ENCODE measurements at regions of chr2 and their contacts with region 1.

Region 1: GRCh38 chr2:64750817-64751285 is 97.1 kb upstream of the SERTAD2 start:
- DNase-seq: peak; percentile 99
- ATAC-seq: peak; percentile 81
- H3K4me3 ChIP-seq: peak overlapping the region; percentile 75 to 99 (median 93)
- H3K4me3 Mint-ChIP-seq: peak overlapping the region; percentile 91
- H3K27ac ChIP-seq: peak overlapping the region; percentile 83 to 88
- H3K27ac Mint-ChIP-seq: peak overlapping the region; percentile 98
- H3K4me1 ChIP-seq: peaks cover 18 to 19% of the 10 kb centered on the region in 2 donors
- H3K4me1 Mint-ChIP-seq: peaks cover 28% of the 10 kb centered on the region
- H3K27me3 ChIP-seq: no peaks in the 10 kb centered on the region
- H3K27me3 Mint-ChIP-seq: no peaks in the 10 kb centered on the region
- CTCF ChIP-seq: no peak

Region 2: GRCh38 chr2:64179582-64180321 is 571.1 kb before region 1 on chr2:
- CTCF ChIA-PET with region 1: no interaction called
- POLR2A ChIA-PET with region 1: no interaction called
- intact Hi-C with region 1: no loop called
- DNase-seq: peak; percentile 42
- ATAC-seq: peak; percentile 56
- H3K4me3 ChIP-seq: no peak overlapping the region
- H3K4me3 Mint-ChIP-seq: no peak overlapping the region
- H3K27ac ChIP-seq: no peak overlapping the region
- H3K27ac Mint-ChIP-seq: no peak overlapping the region
- H3K4me1 ChIP-seq: peaks cover 0 to 4% of the 10 kb centered on the region in 2 donors
- H3K4me1 Mint-ChIP-seq: peaks cover 6% of the 10 kb centered on the region
- H3K27me3 ChIP-seq: no peaks in the 10 kb centered on the region
- H3K27me3 Mint-ChIP-seq: peaks cover 3% of the 10 kb centered on the region
- CTCF ChIP-seq: no peak

Region 3: DNA sequence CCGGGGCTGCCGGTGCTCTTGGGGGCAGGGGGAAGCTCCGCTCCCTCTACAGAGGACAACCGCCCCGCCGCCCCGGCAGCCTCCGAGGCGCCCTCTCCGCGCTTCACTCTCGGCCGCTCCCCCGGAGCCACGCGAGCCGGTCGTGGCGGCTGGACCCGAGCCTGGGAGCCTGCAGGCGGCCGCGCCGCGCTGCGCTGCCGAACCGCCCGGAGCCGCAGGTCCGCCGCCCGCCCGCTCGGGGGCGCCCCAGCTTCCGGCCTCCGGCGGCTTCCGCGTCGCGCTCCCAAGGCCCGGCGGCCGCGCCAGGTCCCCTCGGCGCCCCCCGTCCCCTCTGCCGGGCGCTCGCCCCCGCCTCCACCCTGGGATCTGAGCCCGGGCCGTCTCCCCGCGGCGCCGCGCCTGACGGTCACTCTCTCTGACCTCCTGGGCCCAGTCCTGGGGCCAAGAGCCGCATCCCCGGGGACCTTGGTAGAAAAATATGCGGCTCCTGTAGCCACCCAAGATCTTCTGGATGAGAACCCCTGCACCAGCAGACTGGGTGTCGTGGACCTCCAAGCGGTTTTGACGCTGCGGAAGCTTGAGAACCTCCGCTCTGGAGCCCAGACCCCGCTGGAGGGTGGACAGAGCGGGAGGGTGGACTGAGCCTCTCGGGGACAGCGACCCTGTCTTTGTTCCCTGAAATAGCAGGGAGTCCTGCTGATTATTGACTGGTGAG is 141.5 kb before region 1 on chr2:
- CTCF ChIA-PET with region 1: interaction called, 15 read pairs
- POLR2A ChIA-PET with region 1: interaction called, 3 read pairs
- intact Hi-C with region 1: loop called (anchors 1 kb)
- DNase-seq: peak; percentile 86
- ATAC-seq: peak; percentile 72
- H3K4me3 ChIP-seq: peak overlapping the region; percentile 51 to 77 (median 64)
- H3K4me3 Mint-ChIP-seq: peak overlapping the region; percentile 78
- H3K27ac ChIP-seq: peak overlapping the region; percentile 53 to 84
- H3K27ac Mint-ChIP-seq: peak overlapping the region; percentile 78
- H3K4me1 ChIP-seq: peaks cover 22 to 34% of the 10 kb centered on the region in 2 donors
- H3K4me1 Mint-ChIP-seq: peaks cover 29% of the 10 kb centered on the region
- H3K27me3 ChIP-seq: no peaks in the 10 kb centered on the region
- H3K27me3 Mint-ChIP-seq: no peaks in the 10 kb centered on the region
- CTCF ChIP-seq: peak; percentile 53

Region 4: DNA sequence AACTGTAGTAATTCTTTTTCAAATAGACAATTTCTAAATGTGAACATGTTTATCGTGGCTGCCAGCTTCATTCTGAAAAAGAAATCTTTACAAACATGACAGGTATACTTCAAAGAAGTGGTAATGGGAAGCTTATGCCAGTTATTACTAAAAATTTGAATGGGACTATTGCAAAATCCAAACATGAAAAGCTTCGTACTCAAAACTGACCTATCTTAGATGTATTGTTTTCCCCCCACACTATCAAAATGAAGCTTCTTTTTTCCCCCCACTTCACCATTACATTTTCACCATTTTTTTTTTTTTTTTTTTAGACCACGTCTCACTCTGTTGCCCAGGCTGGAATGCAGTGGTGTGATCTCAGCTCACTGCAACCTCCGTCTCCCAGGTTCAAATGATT is 46.7 kb before region 1 on chr2:
- CTCF ChIA-PET with region 1: no interaction called
- POLR2A ChIA-PET with region 1: interaction called, 10 read pairs
- intact Hi-C with region 1: loop called (anchors 2 kb)
- DNase-seq: no peak
- ATAC-seq: no peak
- H3K4me3 ChIP-seq: no peak overlapping the region
- H3K4me3 Mint-ChIP-seq: no peak overlapping the region
- H3K27ac ChIP-seq: no peak overlapping the region
- H3K27ac Mint-ChIP-seq: no peak overlapping the region
- H3K4me1 ChIP-seq: peaks cover 8 to 12% of the 10 kb centered on the region in 2 donors
- H3K4me1 Mint-ChIP-seq: peaks cover 13% of the 10 kb centered on the region
- H3K27me3 ChIP-seq: no peaks in the 10 kb centered on the region
- H3K27me3 Mint-ChIP-seq: no peaks in the 10 kb centered on the region
- CTCF ChIP-seq: no peak

Region 5: DNA sequence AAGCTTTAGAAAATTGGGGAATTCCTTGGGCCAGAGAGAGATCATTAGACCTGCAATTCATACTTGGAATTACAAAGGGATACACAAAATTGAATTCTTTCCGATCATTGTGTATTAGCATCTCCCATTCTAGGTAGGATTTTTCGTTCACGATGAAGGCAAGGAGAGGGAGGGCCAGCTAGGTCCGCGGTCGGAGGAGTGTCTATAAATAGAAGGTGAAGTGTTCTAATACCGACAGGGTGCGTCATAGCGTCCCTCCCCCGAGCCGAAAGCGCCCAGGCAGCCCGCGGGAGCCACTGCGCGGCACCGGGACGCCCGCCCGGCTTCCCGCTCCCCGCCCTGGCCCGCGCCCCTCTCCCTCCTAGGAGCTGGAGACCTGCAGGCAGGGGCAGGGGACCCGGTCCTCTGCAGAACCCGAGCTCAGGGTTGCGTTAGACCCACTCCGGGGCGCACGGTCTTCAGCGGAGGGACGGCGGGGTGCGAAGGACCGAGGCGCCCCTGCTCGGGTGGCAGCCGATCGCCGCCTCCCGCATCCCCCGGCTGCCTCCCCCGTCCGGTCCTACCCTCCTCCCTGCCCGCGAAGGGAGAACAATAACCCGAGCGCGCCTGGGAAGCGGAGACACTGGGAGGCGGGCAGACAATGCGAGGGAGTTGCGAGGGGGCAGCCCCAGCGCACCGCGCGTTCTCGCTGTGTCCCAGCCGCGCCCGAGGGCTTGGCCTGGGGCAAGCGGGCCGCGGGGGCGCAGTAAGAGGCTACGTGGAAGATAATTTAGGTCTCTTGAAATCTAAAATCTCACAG is 17.0 kb after region 1 on chr2:
- CTCF ChIA-PET with region 1: interaction called, 17 read pairs
- POLR2A ChIA-PET with region 1: interaction called, 19 read pairs
- intact Hi-C with region 1: loop called (anchors 1 kb)
- DNase-seq: peak; percentile 88
- ATAC-seq: peak; percentile 79
- H3K4me3 ChIP-seq: peak overlapping the region; percentile 60 to 99 (median 87)
- H3K4me3 Mint-ChIP-seq: peak overlapping the region; percentile 94
- H3K27ac ChIP-seq: peak overlapping the region; percentile 82 to 95
- H3K27ac Mint-ChIP-seq: peak overlapping the region; percentile 97
- H3K4me1 ChIP-seq: peaks cover 13% of the 10 kb centered on the region in 2 donors
- H3K4me1 Mint-ChIP-seq: peaks cover 24% of the 10 kb centered on the region
- H3K27me3 ChIP-seq: no peaks in the 10 kb centered on the region
- H3K27me3 Mint-ChIP-seq: no peaks in the 10 kb centered on the region
- CTCF ChIP-seq: no peak

Region 6: DNA sequence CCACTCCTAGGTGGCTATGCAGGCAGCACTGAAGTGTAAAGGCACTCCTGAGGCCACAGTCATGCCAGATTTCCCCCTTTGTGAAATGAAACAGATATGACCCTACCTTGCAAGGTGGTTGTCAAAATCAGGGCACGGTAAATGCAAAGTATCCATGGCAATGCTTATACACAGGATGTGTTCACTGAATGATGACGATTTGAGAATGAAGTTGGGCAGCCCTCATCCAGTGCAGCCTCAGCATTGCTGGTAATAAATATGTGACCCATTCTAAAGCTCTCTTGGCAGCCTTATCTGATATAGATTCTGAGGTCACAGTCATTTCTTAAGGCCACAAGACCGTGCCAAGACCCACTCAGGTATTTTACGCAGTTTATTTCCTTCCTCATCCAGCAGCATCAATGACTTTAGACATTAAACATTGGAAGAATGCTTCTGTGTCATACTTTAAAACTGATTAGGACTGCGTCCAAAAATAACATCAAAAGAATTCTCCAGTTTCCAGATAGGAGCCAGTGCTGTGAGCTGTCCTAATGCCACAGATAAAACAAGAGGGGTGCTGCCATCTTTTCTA is 28.4 kb after region 1 on chr2:
- CTCF ChIA-PET with region 1: no interaction called
- POLR2A ChIA-PET with region 1: no interaction called
- intact Hi-C with region 1: no loop called
- DNase-seq: no peak
- ATAC-seq: no peak
- H3K4me3 ChIP-seq: no peak overlapping the region
- H3K4me3 Mint-ChIP-seq: no peak overlapping the region
- H3K27ac ChIP-seq: no peak overlapping the region
- H3K27ac Mint-ChIP-seq: no peak overlapping the region
- H3K4me1 ChIP-seq: no peaks in the 10 kb centered on the region
- H3K4me1 Mint-ChIP-seq: no peaks in the 10 kb centered on the region
- H3K27me3 ChIP-seq: no peaks in the 10 kb centered on the region
- H3K27me3 Mint-ChIP-seq: no peaks in the 10 kb centered on the region
- CTCF ChIP-seq: no peak

Region 7: GRCh38 chr2:64839844-64840243 is 89.0 kb after region 1 on chr2:
- CTCF ChIA-PET with region 1: interaction called, 3 read pairs
- POLR2A ChIA-PET with region 1: interaction called, 10 read pairs
- intact Hi-C with region 1: loop called (anchors 1 kb)
- DNase-seq: peak; percentile 89
- ATAC-seq: peak; percentile 89
- H3K4me3 ChIP-seq: peak overlapping the region in 1 of 5 experiments; percentile 0
- H3K4me3 Mint-ChIP-seq: peak overlapping the region; percentile 74
- H3K27ac ChIP-seq: peak overlapping the region; percentile 79 to 83
- H3K27ac Mint-ChIP-seq: peak overlapping the region; percentile 97
- H3K4me1 ChIP-seq: peaks cover 40 to 59% of the 10 kb centered on the region in 2 donors
- H3K4me1 Mint-ChIP-seq: peaks cover 45% of the 10 kb centered on the region
- H3K27me3 ChIP-seq: no peaks in the 10 kb centered on the region
- H3K27me3 Mint-ChIP-seq: no peaks in the 10 kb centered on the region
- CTCF ChIP-seq: no peak

Region 8: GRCh38 chr2:64865073-64865830 is 114.4 kb after region 1 on chr2:
- CTCF ChIA-PET with region 1: interaction called, 36 read pairs
- POLR2A ChIA-PET with region 1: interaction called, 24 read pairs
- intact Hi-C with region 1: loop called (anchors 1 kb)
- DNase-seq: peak; percentile 86
- ATAC-seq: peak; percentile 54
- H3K4me3 ChIP-seq: peak overlapping the region; percentile 46 to 88 (median 64)
- H3K4me3 Mint-ChIP-seq: no peak overlapping the region
- H3K27ac ChIP-seq: peak overlapping the region; percentile 91 to 93
- H3K27ac Mint-ChIP-seq: peak overlapping the region; percentile 53
- H3K4me1 ChIP-seq: peaks cover 49 to 60% of the 10 kb centered on the region in 2 donors
- H3K4me1 Mint-ChIP-seq: peaks cover 1% of the 10 kb centered on the region
- H3K27me3 ChIP-seq: no peaks in the 10 kb centered on the region
- H3K27me3 Mint-ChIP-seq: no peaks in the 10 kb centered on the region
- CTCF ChIP-seq: peak; percentile 85

Region 9: DNA sequence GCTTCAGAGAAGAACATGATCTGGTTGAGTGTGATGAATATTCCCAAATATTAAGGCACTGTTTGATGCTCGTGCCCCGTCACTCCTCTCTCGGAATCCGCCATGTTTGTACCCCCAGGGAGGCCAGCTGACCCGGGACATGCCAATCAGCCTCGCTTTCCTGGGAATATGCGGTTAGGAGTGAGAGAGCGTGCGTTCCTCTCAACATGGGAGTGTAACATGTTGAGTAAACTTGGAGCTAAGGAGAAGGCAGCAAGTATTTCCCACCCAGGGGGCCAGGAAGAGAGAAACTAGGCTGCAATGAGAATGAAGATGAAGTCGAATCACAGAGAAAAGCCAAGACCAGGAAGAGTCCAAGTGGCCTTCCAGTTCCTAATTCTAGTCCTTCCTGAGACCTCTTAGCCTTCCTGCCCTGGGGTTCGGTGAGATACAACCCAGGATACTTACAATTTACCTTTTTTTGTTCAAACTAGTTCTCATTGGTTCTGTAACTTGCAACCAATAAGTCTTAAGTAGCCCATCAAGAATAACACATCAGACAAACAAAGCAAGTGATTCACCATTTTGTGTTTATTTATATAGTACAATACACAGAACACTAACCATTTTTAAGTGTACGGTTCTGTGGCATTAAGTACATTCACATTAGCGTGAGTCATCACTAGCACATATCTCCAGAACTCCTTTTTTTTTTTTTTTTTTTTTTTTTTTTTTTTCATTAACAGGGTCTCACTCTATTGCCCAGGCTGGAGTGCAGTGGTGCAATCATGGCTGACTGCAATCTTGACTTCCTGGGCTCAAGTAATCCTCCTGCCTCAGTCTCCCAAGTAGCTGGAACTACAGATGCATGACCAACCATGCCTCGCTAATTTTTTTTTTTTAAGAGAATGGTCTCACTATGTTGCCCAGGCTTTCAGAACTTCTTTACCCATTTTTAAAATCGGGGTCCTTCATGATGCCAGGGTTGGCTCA is 201.9 kb after region 1 on chr2:
- CTCF ChIA-PET with region 1: no interaction called
- POLR2A ChIA-PET with region 1: no interaction called
- intact Hi-C with region 1: no loop called
- DNase-seq: no peak
- ATAC-seq: no peak
- H3K4me3 ChIP-seq: no peak overlapping the region
- H3K4me3 Mint-ChIP-seq: no peak overlapping the region
- H3K27ac ChIP-seq: no peak overlapping the region
- H3K27ac Mint-ChIP-seq: no peak overlapping the region
- H3K4me1 ChIP-seq: peaks cover 6 to 15% of the 10 kb centered on the region in 2 donors
- H3K4me1 Mint-ChIP-seq: peaks cover 21% of the 10 kb centered on the region
- H3K27me3 ChIP-seq: no peaks in the 10 kb centered on the region
- H3K27me3 Mint-ChIP-seq: no peaks in the 10 kb centered on the region
- CTCF ChIP-seq: no peak